HepG2 (cell line): ENCODE measurements at regions of chr15 and their contacts with region 1.

Region 1: DNA sequence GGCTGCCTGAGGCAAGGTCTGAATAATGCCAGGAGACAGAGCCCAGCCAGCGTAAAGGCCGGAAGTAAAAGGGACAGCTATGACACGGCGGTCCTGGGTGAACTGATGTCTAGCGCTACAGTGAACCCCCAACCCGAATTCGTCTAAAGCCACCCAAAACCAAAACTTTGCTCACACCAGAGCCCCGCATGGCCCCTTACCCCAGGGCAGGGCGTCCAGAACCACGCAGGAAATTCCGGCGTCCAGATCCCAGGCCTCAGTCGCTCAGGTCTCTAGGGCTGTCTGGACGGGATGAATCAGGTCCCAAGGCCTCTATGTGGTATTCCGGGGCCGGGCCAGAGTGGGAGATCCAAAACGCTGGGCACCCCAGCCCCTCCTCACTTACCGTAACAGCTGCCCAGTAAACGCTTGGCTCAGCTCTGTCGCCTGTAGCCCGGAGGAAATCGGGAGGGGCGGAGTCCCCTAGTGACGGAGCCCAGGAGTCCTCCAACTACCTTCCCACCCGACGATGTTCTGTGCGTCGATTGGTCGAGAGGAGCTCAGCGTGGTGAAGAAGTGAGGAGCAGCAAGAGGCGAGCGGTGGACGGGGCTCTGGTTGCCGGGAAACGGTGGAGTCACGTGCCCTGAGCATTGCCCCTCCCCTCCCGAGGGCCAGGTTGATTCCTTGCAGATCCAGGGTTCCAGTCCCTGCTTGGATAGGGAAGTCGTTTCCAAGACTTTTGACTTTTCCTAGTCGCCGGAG is at the start of gene CCDC32:
- DNase-seq: peak; percentile 98
- ATAC-seq: peak; percentile 96
- H3K4me3 ChIP-seq: peak within 1 kb of the TSS; percentile 86 to 94 (median 91)
- H3K27ac ChIP-seq: peak within 1 kb of the TSS; percentile 73
- H3K4me1 ChIP-seq: peaks cover 46% of the 10 kb centered on the region
- H3K27me3 ChIP-seq: no peaks in the 10 kb centered on the region; a peak in 1 of 5 replicates
- CTCF ChIP-seq: no peak
- EP300 ChIP-seq: no peak
- POLR2A ChIP-seq: peak; percentile 77 to 86
- RAD21 ChIP-seq: no peak
- total RNA-seq, gene CCDC32: 23.2 and 26.3 TPM in 2 replicates

Region 2: DNA sequence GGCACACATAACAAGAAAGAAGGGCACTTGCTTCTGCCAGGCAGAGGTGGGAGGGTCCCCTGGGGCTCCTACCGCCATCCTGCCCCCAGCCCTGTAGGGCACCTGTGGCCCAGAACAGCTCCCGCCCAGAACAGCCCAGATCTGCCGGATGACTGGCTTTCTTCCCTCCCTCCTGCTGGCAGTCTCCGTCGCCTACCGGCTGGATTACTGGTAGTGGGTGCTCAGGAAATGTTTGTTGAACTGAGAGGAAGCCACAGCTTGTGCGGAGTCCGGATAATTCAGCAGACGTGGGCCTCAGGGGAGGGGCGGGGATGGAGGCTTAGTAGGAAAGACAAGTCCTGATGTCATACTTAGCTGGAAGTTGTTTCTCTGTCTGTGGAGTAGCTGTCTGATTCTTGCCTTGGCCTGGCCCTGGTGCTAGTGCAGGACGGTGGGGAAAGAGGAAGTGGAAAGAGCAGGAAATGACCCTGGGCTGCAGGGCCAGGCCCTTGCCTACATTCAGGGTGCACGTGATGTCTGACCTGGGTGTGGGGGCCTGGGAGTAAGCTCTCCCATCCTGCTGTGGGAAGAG is 230.8 kb before region 1 on chr15:
- CTCF ChIA-PET with region 1: no interaction called
- POLR2A ChIA-PET with region 1: no interaction called
- in situ Hi-C with region 1: no loop called
- intact Hi-C with region 1: no loop called
- DNase-seq: no peak
- ATAC-seq: no peak
- H3K4me3 ChIP-seq: no peak overlapping the region
- H3K27ac ChIP-seq: no peak overlapping the region
- H3K4me1 ChIP-seq: peaks cover 22% of the 10 kb centered on the region
- H3K27me3 ChIP-seq: no peaks in the 10 kb centered on the region
- CTCF ChIP-seq: no peak
- EP300 ChIP-seq: no peak
- POLR2A ChIP-seq: no peak
- RAD21 ChIP-seq: no peak

Region 3: DNA sequence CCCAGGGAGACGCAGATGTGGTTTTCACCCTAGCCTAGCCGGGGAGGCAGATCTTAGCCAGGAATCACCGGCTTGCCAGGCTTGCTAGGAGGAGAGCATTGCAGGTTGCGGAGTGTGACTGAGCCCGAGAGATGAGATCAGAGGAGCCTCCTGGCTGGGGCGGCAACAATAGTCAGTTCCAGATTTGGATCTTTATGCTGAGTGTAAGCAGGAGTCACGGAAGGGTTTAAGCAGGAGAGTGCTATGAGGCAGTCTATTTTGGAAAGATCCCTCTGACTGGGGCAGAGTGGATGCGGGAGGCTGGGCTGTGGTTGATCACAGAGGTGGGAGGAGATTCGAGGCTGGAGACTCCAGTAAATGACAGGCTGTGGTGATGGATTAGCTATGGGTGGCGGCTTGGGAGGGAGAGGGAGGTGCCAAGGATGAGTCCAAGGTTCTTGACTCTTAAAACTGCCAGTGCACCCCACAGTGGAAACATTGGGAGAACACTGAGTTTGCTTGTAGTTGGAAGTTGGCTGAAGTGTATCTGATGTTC is 134.4 kb before region 1 on chr15:
- CTCF ChIA-PET with region 1: no interaction called
- POLR2A ChIA-PET with region 1: no interaction called
- in situ Hi-C with region 1: no loop called
- intact Hi-C with region 1: no loop called
- DNase-seq: no peak
- ATAC-seq: no peak
- H3K4me3 ChIP-seq: no peak overlapping the region
- H3K27ac ChIP-seq: no peak overlapping the region
- H3K4me1 ChIP-seq: peaks cover 5% of the 10 kb centered on the region; the same call in 1 of the 2 replicates
- H3K27me3 ChIP-seq: peaks cover 2 to 9% of the 10 kb centered on the region in 2 experiments; a peak in 4 of 5 replicates
- CTCF ChIP-seq: no peak
- EP300 ChIP-seq: no peak
- POLR2A ChIP-seq: no peak
- RAD21 ChIP-seq: no peak

Region 4: DNA sequence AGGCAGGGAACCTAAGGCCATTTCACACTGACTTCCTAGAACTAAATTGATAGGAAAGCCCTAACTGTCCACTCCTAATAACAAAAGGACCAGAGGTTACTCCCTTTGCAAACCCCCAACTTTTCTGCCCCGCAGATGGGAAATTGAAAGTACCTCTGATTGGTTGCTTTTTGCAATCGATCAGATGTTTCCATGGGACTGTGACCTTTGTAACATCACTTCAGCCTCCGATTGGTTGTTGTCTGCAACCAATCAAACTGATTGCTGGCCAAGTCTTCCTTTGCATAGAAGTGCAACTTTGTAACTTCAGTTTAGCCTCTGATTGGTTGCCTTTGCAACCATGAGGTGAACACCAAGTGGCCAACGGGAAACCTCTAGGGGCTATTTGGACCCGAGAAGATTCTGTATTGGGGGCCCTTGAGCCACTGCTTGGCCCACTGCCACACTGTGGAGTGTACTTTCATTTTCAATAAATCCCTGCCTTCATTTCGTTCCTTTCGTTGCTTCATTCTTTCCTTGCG is 18.0 kb after region 1 on chr15:
- CTCF ChIA-PET with region 1: no interaction called
- POLR2A ChIA-PET with region 1: interaction called, 16 read pairs
- in situ Hi-C with region 1: no loop called
- intact Hi-C with region 1: loop called (anchors 1 kb)
- DNase-seq: peak; percentile 99
- ATAC-seq: peak; percentile 94
- H3K4me3 ChIP-seq: peak overlapping the region; percentile 70 to 72 (median 72)
- H3K27ac ChIP-seq: peak overlapping the region; percentile 91
- H3K4me1 ChIP-seq: peaks cover 15% of the 10 kb centered on the region
- H3K27me3 ChIP-seq: no peaks in the 10 kb centered on the region
- CTCF ChIP-seq: no peak
- EP300 ChIP-seq: peak in 1 of 2 experiments; percentile 50; a peak in 1 of 4 replicates
- POLR2A ChIP-seq: peak; percentile 28 to 40; a peak in 2 of 4 replicates
- RAD21 ChIP-seq: no peak

Region 5: DNA sequence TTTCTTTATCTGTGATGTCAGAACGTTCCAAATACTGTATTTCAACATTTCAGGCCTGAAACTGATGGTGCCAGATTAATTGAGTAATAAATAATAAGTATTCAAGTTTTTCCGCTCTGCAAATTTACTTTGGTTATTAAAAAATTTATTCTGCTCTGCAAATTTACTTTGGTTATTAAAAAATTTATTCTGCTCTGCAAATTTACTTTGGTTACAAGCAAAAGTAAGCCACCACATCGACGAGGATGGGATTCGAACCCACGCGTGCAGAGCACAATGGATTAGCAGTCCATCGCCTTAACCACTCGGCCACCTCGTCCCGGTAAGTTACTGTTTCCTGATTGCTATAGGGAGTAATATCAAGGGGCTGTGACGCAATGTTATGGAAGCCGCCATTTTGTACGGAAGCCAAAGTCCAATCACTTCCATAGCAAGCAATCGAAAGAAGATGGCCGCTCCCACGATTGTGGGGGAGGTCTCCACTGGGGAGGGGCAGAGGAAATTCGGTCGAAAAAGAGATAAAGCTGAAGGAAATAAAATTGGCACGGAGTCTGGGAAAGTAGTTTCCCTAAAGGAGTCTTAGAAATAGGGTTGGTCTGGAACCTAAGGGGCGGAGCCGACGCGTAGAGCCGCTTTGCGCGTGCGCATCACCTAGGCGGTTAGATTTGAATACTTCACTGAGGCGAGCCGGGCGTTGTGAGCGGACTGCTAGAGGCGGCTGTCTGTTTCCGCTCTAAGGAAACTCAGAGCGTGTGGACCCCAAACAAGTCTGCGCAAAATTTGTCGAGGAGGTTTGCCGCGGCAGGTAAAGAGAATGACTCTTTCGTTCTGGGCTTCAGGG is 29.0 kb after region 1 on chr15 and contains the start of gene KNL1:
- CTCF ChIA-PET with region 1: no interaction called
- POLR2A ChIA-PET with region 1: interaction called, 7 read pairs
- in situ Hi-C with region 1: no loop called
- intact Hi-C with region 1: loop called (anchors 1 kb)
- DNase-seq: peak; percentile 92
- ATAC-seq: peak; percentile 75
- H3K4me3 ChIP-seq: peak within 1 kb of the TSS; percentile 74 to 83 (median 81)
- H3K27ac ChIP-seq: peak within 1 kb of the TSS; percentile 94
- H3K4me1 ChIP-seq: peaks cover 39% of the 10 kb centered on the region
- H3K27me3 ChIP-seq: no peaks in the 10 kb centered on the region; a peak in 1 of 5 replicates
- CTCF ChIP-seq: no peak
- EP300 ChIP-seq: peak; percentile 30 to 56; a peak in 2 of 4 replicates
- POLR2A ChIP-seq: peak; percentile 47 to 77; a peak in 2 of 4 replicates
- RAD21 ChIP-seq: no peak
- total RNA-seq, gene KNL1: 21.4 and 34.5 TPM in 2 replicates

Region 6: DNA sequence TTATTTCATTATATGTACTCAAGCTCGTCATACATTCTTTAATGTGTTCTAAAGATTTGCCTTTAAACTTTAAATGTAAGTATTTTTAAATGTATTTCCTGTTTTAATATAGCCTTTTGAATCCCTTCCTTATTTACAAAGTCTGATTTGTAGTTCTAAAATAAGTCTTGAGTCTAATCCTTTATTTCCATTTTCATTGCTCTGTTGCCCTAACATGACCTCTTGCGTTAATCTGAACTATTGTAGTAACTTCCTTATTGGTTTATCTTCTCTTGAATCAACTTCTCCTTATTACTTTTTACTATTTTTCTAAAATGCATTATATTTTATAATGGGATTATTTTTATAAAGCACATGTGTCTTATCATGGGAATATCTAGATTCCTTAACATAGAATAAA is 53.3 kb after region 1 on chr15:
- CTCF ChIA-PET with region 1: no interaction called
- POLR2A ChIA-PET with region 1: no interaction called
- in situ Hi-C with region 1: no loop called
- intact Hi-C with region 1: no loop called
- DNase-seq: no peak
- ATAC-seq: no peak
- H3K4me3 ChIP-seq: no peak overlapping the region
- H3K27ac ChIP-seq: no peak overlapping the region
- H3K4me1 ChIP-seq: no peaks in the 10 kb centered on the region
- H3K27me3 ChIP-seq: no peaks in the 10 kb centered on the region
- CTCF ChIP-seq: no peak
- EP300 ChIP-seq: no peak
- POLR2A ChIP-seq: no peak
- RAD21 ChIP-seq: no peak

Region 7: GRCh38 chr15:40763801-40764732 is 199.3 kb after region 1 on chr15 and contains the start of gene GCHFR:
- CTCF ChIA-PET with region 1: no interaction called
- POLR2A ChIA-PET with region 1: no interaction called
- in situ Hi-C with region 1: no loop called
- intact Hi-C with region 1: loop called (anchors 5 kb)
- DNase-seq: peak; percentile 83
- ATAC-seq: peak; percentile 83
- H3K4me3 ChIP-seq: peak within 1 kb of the TSS; percentile 74 to 81 (median 75)
- H3K27ac ChIP-seq: peak within 1 kb of the TSS; percentile 100
- H3K4me1 ChIP-seq: peaks cover 55% of the 10 kb centered on the region
- H3K27me3 ChIP-seq: no peaks in the 10 kb centered on the region
- CTCF ChIP-seq: peak; percentile 70
- EP300 ChIP-seq: no peak; a peak in 1 of 4 replicates
- POLR2A ChIP-seq: peak; percentile 88 to 96
- RAD21 ChIP-seq: peak; percentile 67
- total RNA-seq, gene GCHFR: 92.4 and 93.1 TPM in 2 replicates

Region 8: DNA sequence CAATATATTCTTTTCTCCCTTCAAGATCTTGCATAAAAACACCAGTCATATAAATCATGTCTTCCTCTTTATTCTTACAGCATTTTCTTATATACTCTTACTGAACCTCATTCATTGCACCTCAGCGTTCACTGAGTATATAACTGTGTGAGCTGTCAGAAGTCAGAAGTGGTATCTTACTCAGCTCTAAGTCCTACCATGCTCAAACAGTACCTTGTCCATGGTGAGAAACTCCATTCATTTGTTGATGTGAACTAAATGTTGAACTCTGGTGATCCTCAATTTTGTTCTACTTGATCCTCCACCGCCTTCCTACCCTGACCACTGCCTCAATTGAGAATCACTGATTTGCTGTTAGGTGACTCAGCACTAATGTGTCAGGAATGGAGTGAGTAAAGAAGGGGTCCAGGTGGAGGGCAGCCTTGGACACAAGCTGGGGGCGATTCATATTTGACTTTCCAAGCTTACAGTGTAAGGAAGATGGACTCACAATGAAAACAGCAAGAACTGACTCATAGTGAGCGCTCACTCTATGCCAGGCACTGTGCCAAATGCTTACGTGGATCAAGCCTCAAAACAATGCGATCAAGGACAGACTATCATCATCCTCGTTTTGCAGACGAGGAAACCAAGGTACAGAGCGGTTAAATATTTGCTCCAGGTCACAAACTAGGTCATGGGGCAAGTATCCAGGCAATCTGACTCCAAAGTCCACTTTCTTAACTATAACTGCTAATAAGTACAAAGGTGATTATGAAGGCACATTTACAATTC is 228.6 kb after region 1 on chr15:
- CTCF ChIA-PET with region 1: no interaction called
- POLR2A ChIA-PET with region 1: no interaction called
- in situ Hi-C with region 1: no loop called
- intact Hi-C with region 1: no loop called
- DNase-seq: peak; percentile 96
- ATAC-seq: peak; percentile 94
- H3K4me3 ChIP-seq: peak overlapping the region in 2 of 3 experiments; percentile 1 to 14; a peak in 2 of 6 replicates
- H3K27ac ChIP-seq: peak overlapping the region; percentile 96
- H3K4me1 ChIP-seq: peaks cover 50% of the 10 kb centered on the region
- H3K27me3 ChIP-seq: no peaks in the 10 kb centered on the region
- CTCF ChIP-seq: no peak
- EP300 ChIP-seq: peak in 1 of 2 experiments; percentile 84; a peak in 2 of 4 replicates
- POLR2A ChIP-seq: no peak; a peak in 1 of 4 replicates
- RAD21 ChIP-seq: no peak